Mammary epithelial cell (primary cell): ENCODE measurements at regions of chr3 and their contacts with region 1.

Region 1: DNA sequence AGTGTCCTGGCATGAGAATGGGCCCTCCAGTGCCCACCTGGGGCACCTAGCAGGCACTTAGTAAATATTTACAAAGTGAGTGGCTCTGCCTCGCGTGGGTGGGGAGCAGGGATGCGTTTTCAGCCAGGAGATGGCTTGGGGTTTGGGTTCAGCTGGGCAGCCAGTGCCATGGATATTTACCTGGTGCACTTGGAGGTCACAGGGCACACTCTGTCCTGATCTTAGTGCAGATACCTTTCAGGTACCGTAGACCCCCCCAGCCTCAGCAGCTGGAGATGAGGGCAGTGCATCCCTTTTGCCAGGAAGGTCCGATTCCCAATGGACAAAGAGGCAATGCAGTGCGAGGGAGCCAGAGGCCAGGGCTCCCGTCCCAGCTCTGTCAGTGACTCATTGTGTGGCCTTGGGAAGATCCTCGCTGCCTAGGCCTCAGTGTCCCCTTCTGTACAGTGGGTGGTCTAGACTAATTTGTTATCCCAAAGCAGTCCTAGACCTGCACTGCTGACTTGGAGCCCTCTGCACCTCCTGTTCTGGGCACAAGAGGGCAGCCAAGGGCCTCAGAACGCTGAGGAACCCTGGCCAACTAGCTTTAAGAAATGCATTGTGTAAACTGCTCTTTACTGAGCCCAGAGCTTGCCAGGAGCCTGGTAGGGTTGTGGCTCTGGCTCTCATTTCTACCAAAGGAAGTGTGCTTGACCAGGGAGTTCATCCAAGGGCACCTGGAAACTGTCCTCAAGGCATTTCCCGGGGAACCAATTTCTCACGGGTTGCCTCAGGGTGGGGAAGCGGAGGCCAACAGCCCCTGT is 16.0 kb downstream of the HDAC11 start:
- DNase-seq: peak; percentile 57
- H3K4me3 ChIP-seq: no peak overlapping the region
- H3K27ac ChIP-seq: no peak overlapping the region
- H3K4me1 ChIP-seq: no peaks in the 10 kb centered on the region
- H3K27me3 ChIP-seq: no peaks in the 10 kb centered on the region
- CTCF ChIP-seq: peak; percentile 96

Region 2: GRCh38 chr3:12891985-12892839 is 603.9 kb before region 1 on chr3:
- CTCF ChIA-PET with region 1: no interaction called
- dilution Hi-C with region 1: no loop called
- in situ Hi-C with region 1: no loop called
- intact Hi-C with region 1: no loop called
- DNase-seq: peak; percentile 45
- H3K4me3 ChIP-seq: peak overlapping the region in 1 of 3 experiments; percentile 10
- H3K27ac ChIP-seq: no peak overlapping the region
- H3K4me1 ChIP-seq: peaks cover 3% of the 10 kb centered on the region
- H3K27me3 ChIP-seq: no peaks in the 10 kb centered on the region
- CTCF ChIP-seq: peak; percentile 88 to 94

Region 3: GRCh38 chr3:13574798-13575451 is 78.8 kb after region 1 on chr3:
- CTCF ChIA-PET with region 1: no interaction called
- dilution Hi-C with region 1: no loop called
- in situ Hi-C with region 1: no loop called
- intact Hi-C with region 1: loop called (anchors 10 kb)
- DNase-seq: no peak
- H3K4me3 ChIP-seq: no peak overlapping the region
- H3K27ac ChIP-seq: no peak overlapping the region
- H3K4me1 ChIP-seq: no peaks in the 10 kb centered on the region
- H3K27me3 ChIP-seq: peaks cover 3% of the 10 kb centered on the region
- CTCF ChIP-seq: no peak

Region 4: GRCh38 chr3:13822042-13822441 is 325.9 kb after region 1 on chr3:
- CTCF ChIA-PET with region 1: no interaction called
- dilution Hi-C with region 1: loop called (anchors 25 kb)
- in situ Hi-C with region 1: no loop called
- intact Hi-C with region 1: no loop called
- DNase-seq: peak; percentile 94
- H3K4me3 ChIP-seq: no peak overlapping the region
- H3K27ac ChIP-seq: peak overlapping the region; percentile 30
- H3K4me1 ChIP-seq: peaks cover 39% of the 10 kb centered on the region
- H3K27me3 ChIP-seq: no peaks in the 10 kb centered on the region
- CTCF ChIP-seq: no peak